ENCODE measurements at regions of chr19 and their contacts with region 1.

Region 1: GRCh38 chr19:54168174-54168917 is 4.6 kb downstream of the TMC4 start:
- DNase-seq: peak; percentile 69
- ATAC-seq: peak; percentile 65
- H3K4me3 ChIP-seq: no peak overlapping the region
- H3K27ac ChIP-seq: no peak overlapping the region; the same call in 1 of the 2 replicates
- H3K4me1 ChIP-seq: peaks cover 6 to 32% of the 10 kb centered on the region in 2 experiments; a peak in 3 of 4 replicates
- H3K27me3 ChIP-seq: no peaks in the 10 kb centered on the region
- CTCF ChIP-seq: peak in 2 of 3 experiments; percentile 66 to 91; a peak in 5 of 6 replicates
- POLR2A ChIP-seq: no peak
- RAD21 ChIP-seq: no peak; the same call in 1 of the 2 replicates

Region 2: GRCh38 chr19:54231077-54231931 is 63.0 kb after region 1 on chr19:
- CTCF ChIA-PET with region 1: interaction called, 3 read pairs
- POLR2A ChIA-PET with region 1: interaction called, 3 read pairs
- RAD21 ChIA-PET with region 1: interaction called in 1 of 2 experiments, 3 read pairs
- intact Hi-C with region 1: loop called (anchors 2 kb)
- DNase-seq: peak; percentile 81
- ATAC-seq: peak; percentile 97
- H3K4me3 ChIP-seq: no peak overlapping the region
- H3K27ac ChIP-seq: no peak overlapping the region
- H3K4me1 ChIP-seq: peaks cover 5 to 15% of the 10 kb centered on the region in 2 experiments; a peak in 3 of 4 replicates
- H3K27me3 ChIP-seq: no peaks in the 10 kb centered on the region
- CTCF ChIP-seq: peak; percentile 98 to 100 (median 100)
- POLR2A ChIP-seq: no peak
- RAD21 ChIP-seq: peak; percentile 87